ENCODE measurements at regions of chr11 and their contacts with region 1.

Region 1: GRCh38 chr11:1837171-1838076 is 1.4 kb upstream of the TNNI2 start:
- DNase-seq: peak; percentile 76 to 80
- H3K4me3 ChIP-seq: no peak overlapping the region
- H3K4me3 Mint-ChIP-seq: no peak overlapping the region
- H3K27ac Mint-ChIP-seq: no peak overlapping the region
- H3K4me1 ChIP-seq: peaks cover 44% of the 10 kb centered on the region
- H3K4me1 Mint-ChIP-seq: peaks cover 17% of the 10 kb centered on the region
- H3K27me3 ChIP-seq: no peaks in the 10 kb centered on the region
- H3K27me3 Mint-ChIP-seq: no peaks in the 10 kb centered on the region
- CTCF ChIP-seq: peak; percentile 84 to 91

Region 2: GRCh38 chr11:1870721-1871466 is 33.5 kb after region 1 on chr11:
- CTCF ChIA-PET with region 1: interaction called, 7 read pairs
- POLR2A ChIA-PET with region 1: no interaction called
- intact Hi-C with region 1: loop called (anchors 1 kb)
- DNase-seq: no peak
- H3K4me3 ChIP-seq: no peak overlapping the region
- H3K4me3 Mint-ChIP-seq: peak overlapping the region; percentile 1
- H3K27ac Mint-ChIP-seq: no peak overlapping the region
- H3K4me1 ChIP-seq: no peaks in the 10 kb centered on the region
- H3K4me1 Mint-ChIP-seq: no peaks in the 10 kb centered on the region
- H3K27me3 ChIP-seq: no peaks in the 10 kb centered on the region; the same call in 1 of the 2 replicates
- H3K27me3 Mint-ChIP-seq: peaks cover 2% of the 10 kb centered on the region
- CTCF ChIP-seq: no peak